ENCODE measurements at regions of chr13 and their contacts with region 1.

Region 1: GRCh38 chr13:49606747-49607648 is 21.3 kb upstream of the ARL11 start:
- DNase-seq: peak; percentile 94

Region 2: GRCh38 chr13:49300739-49301589 is 306.0 kb before region 1 on chr13:
- intact Hi-C with region 1: loop called (anchors 1 kb)
- DNase-seq: no peak

Region 3: DNA sequence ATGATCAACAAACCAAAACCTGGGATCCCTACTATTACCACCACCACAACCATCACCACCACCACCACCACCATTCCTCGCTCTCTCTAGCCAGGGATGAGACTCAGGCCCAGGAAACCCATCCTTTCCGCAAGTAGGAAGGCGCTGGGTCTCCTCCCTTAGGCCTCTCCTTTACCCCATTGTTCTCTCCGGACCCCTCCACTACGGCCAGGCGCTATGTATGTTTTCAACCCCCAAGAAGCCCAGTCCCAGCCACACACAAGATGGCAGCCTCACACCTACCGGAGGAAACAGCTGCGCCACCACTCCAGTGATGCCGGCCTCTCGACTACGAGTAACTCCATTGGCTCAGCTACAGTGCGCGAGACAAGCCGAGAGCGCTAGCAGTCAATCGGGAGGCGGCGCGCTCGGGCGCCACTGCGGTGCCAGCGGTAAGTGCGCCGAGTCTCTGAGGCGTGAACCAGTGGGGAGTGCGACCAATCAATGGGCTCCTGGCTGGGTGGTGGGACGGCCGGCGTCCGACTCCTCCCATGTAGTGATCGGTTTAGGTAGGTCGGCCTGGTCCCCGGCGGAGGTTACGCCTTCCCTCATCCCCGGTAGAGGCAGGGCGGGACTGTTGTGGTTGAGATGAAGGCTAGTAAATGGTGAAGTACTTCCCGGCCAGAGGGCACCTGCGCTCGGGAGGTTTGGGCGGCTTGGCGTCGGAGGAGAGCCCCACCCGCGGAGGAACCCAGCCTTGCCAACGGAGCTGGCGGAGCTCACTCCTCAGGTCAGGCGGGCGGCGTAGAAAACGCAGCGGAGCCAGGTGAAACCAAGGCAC is 163.1 kb before region 1 on chr13 and contains the starts of genes CAB39L and SETDB2:
- intact Hi-C with region 1: loop called (anchors 5 kb)
- DNase-seq: peak; percentile 100
- total RNA-seq, gene CAB39L: 9.8 TPM
- total RNA-seq, gene SETDB2: 11.2 TPM

Region 4: GRCh38 chr13:49495783-49496762 is 110.9 kb before region 1 on chr13 and contains the start of gene PHF11:
- intact Hi-C with region 1: loop called (anchors 5 kb)
- DNase-seq: peak; percentile 93
- total RNA-seq, gene PHF11: 20.5 TPM

Region 5: DNA sequence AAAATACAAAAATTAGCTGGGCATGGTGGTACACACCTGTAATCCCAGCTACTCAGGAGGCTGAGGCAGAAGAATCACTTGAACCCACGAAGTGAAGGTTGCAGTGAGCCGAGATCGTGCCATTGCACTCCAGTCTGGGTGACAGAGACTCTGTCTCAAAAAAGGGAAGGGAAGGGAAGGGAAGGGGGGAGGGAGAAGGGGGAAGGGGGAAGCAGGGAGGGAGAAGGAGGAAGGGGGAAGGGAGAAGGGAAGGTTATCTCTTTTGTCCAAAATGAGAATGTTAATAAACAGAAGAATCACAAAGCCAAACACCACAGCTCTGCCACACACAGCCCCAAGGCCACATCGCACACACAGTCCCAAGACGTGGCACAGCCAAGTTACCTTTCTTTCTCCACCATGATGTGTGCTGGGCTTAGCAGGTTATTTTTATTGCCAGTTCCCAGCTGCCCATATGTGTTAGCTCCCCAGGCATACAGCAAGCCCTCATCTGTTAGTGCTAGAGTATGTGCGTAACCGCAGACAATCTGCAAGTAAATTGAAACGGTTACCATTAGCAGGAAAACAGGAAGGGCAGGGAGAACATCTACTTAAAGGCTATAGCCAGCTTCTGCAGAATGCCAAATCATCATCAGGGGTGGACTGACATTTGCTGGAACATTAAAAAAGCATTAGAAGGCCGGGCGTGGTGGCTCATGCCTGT is 55.9 kb before region 1 on chr13:
- intact Hi-C with region 1: loop called (anchors 10 kb)
- DNase-seq: no peak

Region 6: DNA sequence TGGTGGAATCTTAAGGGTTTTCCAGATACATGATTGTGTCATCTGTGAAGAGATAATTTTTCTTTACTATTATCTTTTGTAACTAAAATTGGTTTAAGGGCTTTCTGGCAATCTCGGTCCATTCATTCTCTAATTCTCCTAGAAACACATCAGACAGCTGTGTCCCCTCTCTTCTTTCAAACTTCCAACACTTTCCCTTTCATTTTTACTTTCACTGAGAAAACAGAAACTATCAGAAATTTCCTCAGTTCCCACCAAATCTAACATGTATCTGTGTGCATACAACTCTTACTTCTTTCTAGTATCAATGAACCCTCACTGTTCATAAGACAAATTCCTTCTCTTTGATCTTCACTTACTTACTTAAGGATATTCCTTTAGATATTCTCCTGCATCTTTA is 448.5 kb after region 1 on chr13:
- intact Hi-C with region 1: no loop called
- DNase-seq: no peak